HEK293 (cell line): ENCODE measurements at regions of chr1 and their contacts with region 1.

Region 1: GRCh38 chr1:21200767-21201166 is 24.1 kb upstream of the EIF4G3 start:
- H3K4me3 ChIP-seq: no peak overlapping the region
- H3K27ac ChIP-seq: no peak overlapping the region
- H3K4me1 ChIP-seq: no peaks in the 10 kb centered on the region
- CTCF ChIP-seq: no peak

Region 2: DNA sequence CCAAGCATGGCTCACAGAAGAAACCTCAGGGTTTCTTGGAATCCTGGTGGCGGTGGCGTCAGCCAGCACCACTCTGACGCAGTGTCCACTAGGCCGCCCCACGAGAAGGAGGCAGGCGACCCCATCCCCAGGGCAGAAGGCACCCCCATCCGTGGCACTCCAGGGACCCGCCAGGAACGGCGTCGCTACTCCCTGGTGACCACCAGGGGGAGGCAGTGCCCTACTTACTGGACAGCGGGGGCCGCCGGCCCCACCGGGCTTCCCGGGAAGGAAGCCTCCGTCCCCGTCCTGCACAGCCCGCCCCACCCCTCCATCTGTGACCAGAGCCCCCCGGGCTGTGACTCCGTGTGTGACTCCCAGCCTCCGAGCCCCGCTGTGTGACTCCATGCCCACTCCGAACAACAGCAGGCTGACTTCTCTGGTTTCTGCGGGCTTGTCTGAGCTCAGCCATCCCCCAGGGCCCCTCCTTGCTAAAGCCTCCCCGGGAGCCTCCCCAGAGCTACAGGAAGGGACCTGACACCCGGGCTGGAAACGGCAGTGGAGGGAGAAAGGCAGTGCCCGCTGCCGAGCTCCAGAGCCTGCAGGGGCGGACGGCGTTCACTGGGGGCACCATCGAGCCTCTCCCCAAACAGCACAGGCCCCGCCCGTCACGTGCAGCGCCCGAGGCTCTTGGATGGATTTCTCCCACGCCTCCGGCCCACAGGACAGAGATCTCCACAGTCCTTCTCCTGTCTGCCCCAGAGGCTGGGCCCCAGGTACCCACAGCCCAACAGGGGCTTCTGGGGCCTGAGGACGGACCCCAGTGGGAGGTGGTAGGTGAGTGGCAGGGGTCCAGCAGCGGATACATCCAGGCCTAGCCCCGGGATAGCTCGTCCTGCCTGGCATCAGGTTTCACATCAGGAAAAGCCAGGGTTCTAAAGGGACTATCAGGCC is 504.1 kb before region 1 on chr1:
- CTCF ChIA-PET with region 1: interaction called, 63 read pairs
- POLR2A ChIA-PET with region 1: no interaction called
- H3K4me3 ChIP-seq: peak overlapping the region; percentile 43
- H3K27ac ChIP-seq: peak overlapping the region; percentile 67
- H3K4me1 ChIP-seq: no peaks in the 10 kb centered on the region
- CTCF ChIP-seq: peak; percentile 92

Region 3: DNA sequence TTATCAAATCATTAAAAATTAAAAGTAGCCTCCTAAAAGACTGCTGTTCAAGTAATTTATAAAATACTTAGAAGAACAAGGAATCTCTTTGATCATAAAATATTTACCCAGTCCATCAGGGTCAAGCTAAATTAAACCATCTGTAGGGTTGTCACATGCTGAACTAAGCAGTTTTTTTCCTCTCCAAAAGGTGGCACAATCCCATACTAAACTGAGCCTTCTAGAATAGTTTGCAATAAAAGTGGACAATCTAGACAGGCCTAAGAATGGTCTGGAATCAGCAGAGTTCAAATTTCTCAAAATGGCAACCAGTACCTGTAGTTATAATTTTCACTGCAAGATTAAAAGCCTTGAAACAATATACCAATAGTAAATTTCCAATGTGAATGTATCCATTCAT is 218.9 kb before region 1 on chr1:
- CTCF ChIA-PET with region 1: interaction called, 52 read pairs
- POLR2A ChIA-PET with region 1: no interaction called
- H3K4me3 ChIP-seq: no peak overlapping the region
- H3K27ac ChIP-seq: no peak overlapping the region
- H3K4me1 ChIP-seq: peaks cover 8% of the 10 kb centered on the region
- CTCF ChIP-seq: no peak

Region 4: GRCh38 chr1:21069549-21069948 is 131.2 kb before region 1 on chr1:
- CTCF ChIA-PET with region 1: interaction called, 10 read pairs
- POLR2A ChIA-PET with region 1: no interaction called
- H3K4me3 ChIP-seq: no peak overlapping the region
- H3K27ac ChIP-seq: peak overlapping the region; percentile 26; the same call in 1 of the 2 replicates
- H3K4me1 ChIP-seq: peaks cover 41% of the 10 kb centered on the region
- CTCF ChIP-seq: no peak

Region 5: GRCh38 chr1:21117597-21118001 is 83.2 kb before region 1 on chr1:
- CTCF ChIA-PET with region 1: no interaction called
- POLR2A ChIA-PET with region 1: no interaction called
- H3K4me3 ChIP-seq: no peak overlapping the region
- H3K27ac ChIP-seq: no peak overlapping the region
- H3K4me1 ChIP-seq: no peaks in the 10 kb centered on the region; the same call in 1 of the 2 replicates
- CTCF ChIP-seq: no peak

Region 6: DNA sequence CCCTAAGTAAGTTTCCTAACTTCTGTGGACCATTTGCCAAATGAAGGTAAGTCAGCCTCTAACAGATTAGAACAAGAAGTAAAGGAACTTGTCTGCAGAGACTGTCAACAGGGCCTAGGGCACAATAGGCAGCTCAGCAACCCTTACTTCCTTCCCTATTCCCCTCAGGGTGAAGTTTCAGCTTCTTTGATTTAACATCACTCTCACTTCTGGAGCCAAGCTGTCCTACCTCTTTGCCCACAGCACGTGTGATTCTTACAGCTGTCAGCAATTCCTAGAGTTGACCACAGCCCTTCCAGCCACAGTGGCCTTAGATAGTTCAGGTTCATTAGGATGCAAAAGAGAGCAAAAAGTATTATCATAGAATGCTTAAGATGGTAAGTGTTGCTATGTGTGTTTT is 16.5 kb before region 1 on chr1:
- CTCF ChIA-PET with region 1: interaction called, 13 read pairs
- POLR2A ChIA-PET with region 1: no interaction called
- H3K4me3 ChIP-seq: no peak overlapping the region
- H3K27ac ChIP-seq: no peak overlapping the region
- H3K4me1 ChIP-seq: no peaks in the 10 kb centered on the region
- CTCF ChIP-seq: no peak

Region 7: DNA sequence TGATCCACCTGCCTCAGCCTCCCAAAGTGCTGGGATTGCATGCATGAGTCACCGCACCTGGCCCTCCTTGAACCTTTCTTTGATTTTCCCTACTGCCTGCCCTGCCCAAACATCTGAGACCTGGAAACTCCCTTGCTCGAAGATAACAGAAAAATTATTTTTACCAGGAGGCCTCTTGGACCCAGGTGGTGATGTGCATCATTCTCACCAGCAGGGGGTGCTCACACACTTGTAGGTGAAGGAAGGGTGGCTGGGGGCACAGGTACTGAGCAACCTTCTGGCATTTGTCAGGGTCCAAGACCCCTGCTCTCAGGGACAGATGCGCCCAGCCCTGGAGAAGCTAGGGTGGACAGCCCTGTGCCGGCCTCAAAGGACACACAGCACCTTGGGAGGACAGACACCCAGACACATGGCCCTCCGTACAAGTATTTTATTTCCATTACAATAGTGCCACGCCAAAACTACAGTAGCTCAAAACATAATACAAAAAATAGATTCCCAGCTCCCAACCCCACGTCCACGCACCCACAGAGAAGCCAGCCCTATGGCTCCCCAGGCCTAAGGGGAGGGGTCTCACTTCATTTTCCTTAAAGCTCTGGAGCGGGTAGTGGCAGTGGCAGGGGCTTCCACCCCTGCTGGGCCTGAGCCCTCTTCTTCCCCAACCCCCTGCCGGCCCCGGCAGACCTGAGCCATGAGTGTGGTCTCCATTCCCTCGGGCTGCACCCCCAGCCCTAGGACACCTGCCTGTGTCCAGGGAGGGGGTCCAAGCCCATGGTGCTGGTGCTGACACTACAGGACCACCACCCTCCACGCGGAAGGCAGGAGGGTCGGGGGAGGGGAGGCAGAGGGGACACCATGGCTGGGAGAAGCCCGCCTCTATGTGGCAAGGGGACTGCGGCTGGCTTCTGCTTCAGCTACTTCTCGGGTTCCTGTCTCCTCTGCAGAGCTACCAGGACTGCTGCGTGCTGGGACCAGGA is 16.4 kb after region 1 on chr1:
- CTCF ChIA-PET with region 1: interaction called, 12 read pairs
- POLR2A ChIA-PET with region 1: no interaction called
- H3K4me3 ChIP-seq: no peak overlapping the region
- H3K27ac ChIP-seq: no peak overlapping the region
- H3K4me1 ChIP-seq: no peaks in the 10 kb centered on the region
- CTCF ChIP-seq: peak; percentile 36; the same call in 1 of the 2 replicates